ENCODE measurements at regions of chr1 and their contacts with region 1.

Region 1: GRCh38 chr1:155989242-155990004 is 11.1 kb upstream of the ARHGEF2 start:
- DNase-seq: peak; percentile 82
- ATAC-seq: peak; percentile 94

Region 2: DNA sequence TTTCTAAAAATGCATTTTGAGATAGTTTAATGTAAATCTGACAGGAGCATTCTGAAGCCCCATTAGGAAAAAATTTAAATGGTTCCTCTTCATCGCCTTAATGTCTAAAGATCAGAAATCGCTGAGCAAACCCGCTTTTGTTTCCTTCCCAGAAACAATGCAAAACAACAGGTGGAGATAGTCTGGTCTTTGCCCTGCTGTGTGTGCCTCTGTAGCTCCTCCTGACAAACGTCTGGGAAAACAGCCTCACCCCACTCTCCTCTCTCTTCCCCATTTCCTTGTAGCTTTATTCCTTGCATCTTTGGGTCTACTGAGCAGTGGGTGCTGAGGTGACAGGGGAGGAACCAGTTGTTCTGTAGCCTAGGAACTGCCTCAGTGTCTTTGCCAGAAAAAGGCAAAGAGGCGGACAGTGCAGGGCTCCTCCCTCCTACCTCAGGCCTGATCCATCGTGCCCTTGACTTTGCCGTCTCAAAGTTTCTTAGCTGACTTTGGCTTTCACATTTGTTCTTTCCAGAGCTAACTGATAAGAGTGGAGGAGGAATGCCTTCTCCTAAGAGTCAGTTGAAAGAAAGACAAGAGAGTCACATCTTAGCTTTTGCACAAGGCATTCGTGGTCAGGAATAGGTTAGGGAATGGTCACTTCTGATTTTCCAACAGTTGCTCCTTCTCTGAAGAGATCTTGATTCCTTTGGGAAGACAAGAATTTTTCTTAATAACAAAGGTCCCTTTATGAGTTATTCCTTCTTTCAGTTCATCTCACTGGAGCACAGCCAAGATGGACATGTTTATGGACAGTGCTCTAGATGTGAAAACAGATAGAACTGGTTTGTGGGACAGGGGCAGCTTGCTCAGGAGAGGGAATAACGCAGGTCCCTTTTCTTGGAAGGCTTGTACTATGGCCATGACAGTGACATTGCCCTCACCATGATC is 105.1 kb before region 1 on chr1:
- intact Hi-C with region 1: no loop called
- DNase-seq: no peak
- ATAC-seq: peak; percentile 78

Region 3: DNA sequence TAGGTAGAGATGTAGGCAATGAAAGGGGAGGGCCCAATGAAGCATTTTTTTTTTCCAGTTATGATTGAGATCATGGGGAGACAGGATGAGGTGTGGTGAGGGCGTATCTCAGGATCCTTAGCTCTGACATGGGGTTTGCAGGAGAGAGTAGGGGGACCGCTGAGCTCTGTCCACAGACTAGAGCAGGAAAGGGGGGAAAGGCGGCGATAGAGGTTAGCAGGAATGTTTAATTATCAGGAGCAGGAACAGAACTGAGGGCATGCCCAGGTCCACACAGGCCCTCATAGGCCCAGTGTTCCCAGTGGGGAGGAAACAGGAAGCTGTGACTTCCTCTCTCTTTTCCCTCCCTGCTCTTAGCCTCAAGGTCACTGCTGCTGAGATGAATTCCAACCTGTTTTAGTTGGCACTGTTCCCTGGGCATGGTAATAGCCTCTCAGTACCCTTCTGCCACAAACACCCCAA is 48.9 kb before region 1 on chr1:
- intact Hi-C with region 1: loop called (anchors 10 kb)
- DNase-seq: no peak
- ATAC-seq: peak; percentile 41